Mucosa of descending colon (tissue), 3 donors: ENCODE measurements at regions of chr5 and their contacts with region 1.

Region 1: DNA sequence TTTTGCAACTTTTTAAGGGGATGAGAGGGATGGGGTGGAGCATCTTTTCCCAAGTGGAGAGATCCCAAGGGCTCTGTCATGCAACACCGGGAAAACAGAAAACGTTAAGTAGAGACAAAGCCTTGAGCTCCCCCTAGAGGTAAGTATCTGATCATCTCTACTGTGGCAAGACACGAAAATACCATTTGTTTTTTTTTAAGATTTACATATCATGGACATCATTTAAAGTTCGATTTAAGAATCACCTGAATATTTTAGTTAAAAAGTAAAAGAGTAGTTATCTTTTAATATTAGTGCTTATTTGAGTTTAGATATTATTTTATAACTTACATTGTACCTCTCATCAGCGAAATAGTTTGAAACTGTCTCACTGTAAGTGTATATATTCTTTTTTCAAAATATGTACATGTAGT is 200.4 kb downstream of the LRRC70 start:
- DNase-seq: peak in 1 of 3 donors; percentile 34
- ATAC-seq: peak; percentile 74
- H3K4me3 ChIP-seq: no peak overlapping the region
- H3K4me1 ChIP-seq: no peaks in the 10 kb centered on the region
- CTCF ChIP-seq: no peak

Region 2: DNA sequence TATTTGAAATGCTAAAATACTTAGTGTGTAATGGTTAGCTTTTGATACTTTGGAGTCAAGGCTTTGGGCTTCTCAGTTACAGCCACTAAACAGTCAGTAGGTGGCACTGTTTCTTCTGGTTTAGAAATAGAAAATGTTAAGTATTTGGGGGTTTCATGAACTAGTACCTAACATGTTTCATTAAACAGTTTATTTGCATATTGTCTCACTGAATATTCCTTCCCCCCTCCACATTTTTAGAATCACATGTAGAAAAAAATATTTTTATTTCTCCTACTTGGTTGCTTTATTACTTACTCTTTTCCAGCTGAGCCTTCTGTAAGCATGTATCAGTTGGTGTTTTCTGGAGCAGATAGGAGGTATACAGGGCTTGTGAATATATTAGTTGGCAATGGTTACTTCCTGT is 318.4 kb before region 1 on chr5:
- intact Hi-C with region 1: loop called (anchors 5 to 10 kb)
- DNase-seq: peak in 1 of 3 donors; percentile 6
- ATAC-seq: no peak
- H3K4me3 ChIP-seq: no peak overlapping the region
- H3K4me1 ChIP-seq: no peaks in the 10 kb centered on the region
- CTCF ChIP-seq: peak; percentile 54

Region 3: DNA sequence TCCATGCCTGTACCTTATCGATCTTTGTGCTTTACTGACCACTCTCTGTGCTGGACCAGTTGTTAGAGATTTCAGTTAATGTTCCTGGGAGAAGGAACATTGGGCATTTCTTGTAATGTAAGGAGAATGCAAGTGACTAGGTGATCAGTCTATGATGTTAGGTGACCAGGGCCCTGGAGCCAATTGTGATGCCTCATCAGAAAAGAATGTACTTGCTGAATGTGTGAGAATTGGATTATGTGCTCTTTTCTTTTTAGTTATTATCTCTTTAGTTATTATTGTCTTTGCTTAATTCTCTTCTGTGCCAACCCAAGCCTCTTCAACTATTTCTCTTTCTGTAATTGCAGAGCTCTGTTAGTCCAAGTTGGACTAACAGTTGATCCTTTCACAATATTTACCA is 107.5 kb before region 1 on chr5:
- intact Hi-C with region 1: no loop called
- DNase-seq: no peak
- ATAC-seq: no peak
- H3K4me3 ChIP-seq: no peak overlapping the region
- H3K4me1 ChIP-seq: no peaks in the 10 kb centered on the region
- CTCF ChIP-seq: no peak

Region 4: GRCh38 chr5:62689599-62690368 is 89.2 kb before region 1 on chr5:
- intact Hi-C with region 1: no loop called
- DNase-seq: no peak
- ATAC-seq: no peak
- H3K4me3 ChIP-seq: no peak overlapping the region
- H3K4me1 ChIP-seq: no peaks in the 10 kb centered on the region
- CTCF ChIP-seq: no peak